ENCODE measurements at regions of chr21 and their contacts with region 1.

Region 1: GRCh38 chr21:42392721-42393442 is 3.0 kb downstream of the TMPRSS3 start:
- DNase-seq: peak in 8 of 35 experiments; percentile 20 to 67 (median 37)
- ATAC-seq: peak; percentile 91 to 98 (median 94)
- H3K4me3 ChIP-seq: peak overlapping the region; percentile 3 to 19
- H3K4me3 Mint-ChIP-seq: peak overlapping the region; percentile 21 to 67 (median 37)
- H3K27ac ChIP-seq: peak overlapping the region; percentile 6
- H3K27ac Mint-ChIP-seq: peak overlapping the region; percentile 62 to 68
- H3K4me1 ChIP-seq: peaks cover 43 to 45% of the 10 kb centered on the region in 2 experiments
- H3K4me1 Mint-ChIP-seq: peaks cover 53 to 77% (median 74%) of the 10 kb centered on the region in 3 donors
- H3K27me3 ChIP-seq: no peaks in the 10 kb centered on the region
- H3K27me3 Mint-ChIP-seq: no peaks in the 10 kb centered on the region

Region 2: GRCh38 chr21:42381334-42381984 is 11.4 kb before region 1 on chr21:
- CTCF ChIA-PET with region 1: interaction called in 1 of 2 experiments, 15 read pairs
- POLR2A ChIA-PET with region 1: no interaction called
- DNase-seq: peak in 22 of 35 experiments; percentile 14 to 62 (median 41)
- ATAC-seq: peak; percentile 43 to 78 (median 65)
- H3K4me3 ChIP-seq: no peak overlapping the region
- H3K4me3 Mint-ChIP-seq: no peak overlapping the region
- H3K27ac ChIP-seq: no peak overlapping the region
- H3K27ac Mint-ChIP-seq: peak overlapping the region in 1 of 2 donors; percentile 36
- H3K4me1 ChIP-seq: peaks cover 14 to 20% of the 10 kb centered on the region in 2 experiments
- H3K4me1 Mint-ChIP-seq: peaks cover 7 to 28% (median 22%) of the 10 kb centered on the region in 3 donors
- H3K27me3 ChIP-seq: peaks cover 0 to 5% of the 10 kb centered on the region in 2 experiments
- H3K27me3 Mint-ChIP-seq: no peaks in the 10 kb centered on the region